Right ventricle myocardium superior (tissue), 1 donor: ENCODE measurements at regions of chr7 and their contacts with region 1.

Region 1: DNA sequence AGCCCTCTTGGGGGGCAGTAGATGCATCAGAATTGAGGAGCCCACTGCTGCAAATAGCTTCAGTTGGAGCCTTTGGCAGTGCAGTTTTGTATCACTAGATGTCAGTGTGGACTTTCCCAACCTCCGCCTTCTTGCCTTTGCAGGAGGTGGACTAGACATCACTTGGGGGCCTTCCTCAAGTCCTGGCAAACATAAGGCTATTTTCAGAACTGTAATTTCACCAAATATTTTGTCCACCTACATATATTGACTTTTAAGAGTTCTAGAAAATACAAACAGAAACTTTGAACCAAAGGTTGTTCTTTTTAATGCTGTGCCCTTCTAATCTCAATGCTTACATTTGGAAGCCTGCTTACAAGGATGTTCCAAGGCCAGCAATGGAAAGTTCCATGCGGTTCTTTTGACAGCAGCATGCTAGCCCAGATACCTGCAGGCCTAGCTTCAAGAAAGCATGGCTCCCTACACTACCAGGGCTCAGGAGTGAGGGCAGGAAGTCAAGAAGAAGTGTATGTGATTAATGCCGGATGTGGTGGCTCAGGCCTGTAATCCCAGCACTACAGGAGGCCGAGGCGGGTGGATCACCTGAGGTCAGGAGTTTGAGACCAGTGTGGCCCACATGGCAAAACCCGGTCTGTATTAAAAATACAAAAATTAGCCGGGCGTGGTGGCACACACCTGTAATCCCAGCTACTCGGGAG is 8.0 kb upstream of the ZNRF2 start:
- DNase-seq: no peak
- ATAC-seq: peak; percentile 76

Region 2: GRCh38 chr7:29163854-29164253 is 1112.5 kb before region 1 on chr7:
- intact Hi-C with region 1: no loop called
- DNase-seq: no peak
- ATAC-seq: no peak

Region 3: DNA sequence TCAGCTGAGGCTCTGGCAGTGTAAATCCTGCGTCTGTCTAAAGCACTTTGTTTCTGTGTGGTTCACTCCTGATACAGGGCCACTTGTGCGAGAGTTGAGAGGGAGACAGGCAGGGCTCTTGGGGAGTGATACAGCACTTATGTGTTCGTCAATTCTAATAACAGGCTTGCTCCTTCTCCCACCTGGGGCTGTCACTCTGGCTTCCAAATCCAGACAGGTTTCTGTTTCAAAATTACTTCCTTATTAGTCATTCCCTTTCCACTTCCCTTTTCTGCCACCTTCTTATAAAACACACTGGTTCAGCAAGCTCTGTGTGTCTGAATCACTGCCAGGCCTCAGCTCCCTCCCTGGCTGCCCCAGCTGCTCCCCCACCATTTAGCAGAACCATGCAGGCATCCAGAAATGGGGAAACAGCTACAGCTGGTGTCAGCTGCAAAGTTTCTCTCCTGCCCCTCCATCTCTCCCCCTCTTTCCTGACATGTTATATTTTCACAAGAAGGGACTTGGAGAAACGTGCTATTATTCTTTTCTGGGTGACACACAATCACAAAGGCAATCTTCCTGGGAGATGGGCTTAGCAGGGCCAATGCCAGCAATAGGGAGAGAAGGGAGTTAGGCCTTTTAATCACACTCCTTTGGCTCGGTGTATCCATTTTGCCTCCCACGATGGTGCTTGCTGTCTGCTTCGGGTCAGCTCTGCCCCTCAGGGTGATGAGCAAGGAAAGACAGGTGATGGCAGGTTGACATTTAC is 50.3 kb before region 1 on chr7:
- intact Hi-C with region 1: no loop called
- DNase-seq: peak; percentile 76
- ATAC-seq: peak; percentile 89

Region 4: DNA sequence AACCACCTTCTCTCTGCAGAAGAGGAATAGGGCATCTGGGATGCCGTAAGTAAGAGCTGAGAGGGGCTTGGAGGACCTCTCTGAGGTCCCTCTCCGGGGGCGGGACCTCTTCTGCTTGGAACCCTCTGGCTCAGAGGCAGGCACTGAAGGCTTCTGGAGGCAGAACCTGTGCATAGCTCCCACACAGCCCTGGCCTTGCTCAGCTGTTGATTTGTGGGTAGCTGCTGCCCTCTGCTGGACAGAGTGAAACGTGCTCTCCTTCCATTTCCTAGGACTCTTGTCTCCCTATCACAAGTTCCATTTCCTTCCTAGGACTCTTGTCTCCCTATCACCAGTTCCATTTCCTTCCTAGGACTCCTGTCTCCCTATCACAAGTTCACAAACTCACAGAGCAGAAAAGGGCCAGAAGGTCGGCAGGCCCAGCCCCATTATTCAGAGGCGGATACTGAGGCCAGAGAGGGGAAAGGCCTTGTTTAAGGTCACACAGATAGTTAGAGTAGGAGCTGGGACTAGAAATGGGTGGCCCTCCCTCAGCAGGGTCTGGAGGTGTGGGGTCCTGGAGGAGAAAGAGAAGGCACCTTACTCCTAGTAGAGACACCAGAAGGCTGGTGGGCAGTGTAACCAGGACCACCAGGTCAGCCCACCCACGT is 288.0 kb after region 1 on chr7:
- intact Hi-C with region 1: loop called (anchors 5 kb)
- DNase-seq: peak; percentile 80
- ATAC-seq: peak; percentile 95